Ascending aorta (tissue), 2 donors: ENCODE measurements at regions of chr3 and their contacts with region 1.

Region 1: DNA sequence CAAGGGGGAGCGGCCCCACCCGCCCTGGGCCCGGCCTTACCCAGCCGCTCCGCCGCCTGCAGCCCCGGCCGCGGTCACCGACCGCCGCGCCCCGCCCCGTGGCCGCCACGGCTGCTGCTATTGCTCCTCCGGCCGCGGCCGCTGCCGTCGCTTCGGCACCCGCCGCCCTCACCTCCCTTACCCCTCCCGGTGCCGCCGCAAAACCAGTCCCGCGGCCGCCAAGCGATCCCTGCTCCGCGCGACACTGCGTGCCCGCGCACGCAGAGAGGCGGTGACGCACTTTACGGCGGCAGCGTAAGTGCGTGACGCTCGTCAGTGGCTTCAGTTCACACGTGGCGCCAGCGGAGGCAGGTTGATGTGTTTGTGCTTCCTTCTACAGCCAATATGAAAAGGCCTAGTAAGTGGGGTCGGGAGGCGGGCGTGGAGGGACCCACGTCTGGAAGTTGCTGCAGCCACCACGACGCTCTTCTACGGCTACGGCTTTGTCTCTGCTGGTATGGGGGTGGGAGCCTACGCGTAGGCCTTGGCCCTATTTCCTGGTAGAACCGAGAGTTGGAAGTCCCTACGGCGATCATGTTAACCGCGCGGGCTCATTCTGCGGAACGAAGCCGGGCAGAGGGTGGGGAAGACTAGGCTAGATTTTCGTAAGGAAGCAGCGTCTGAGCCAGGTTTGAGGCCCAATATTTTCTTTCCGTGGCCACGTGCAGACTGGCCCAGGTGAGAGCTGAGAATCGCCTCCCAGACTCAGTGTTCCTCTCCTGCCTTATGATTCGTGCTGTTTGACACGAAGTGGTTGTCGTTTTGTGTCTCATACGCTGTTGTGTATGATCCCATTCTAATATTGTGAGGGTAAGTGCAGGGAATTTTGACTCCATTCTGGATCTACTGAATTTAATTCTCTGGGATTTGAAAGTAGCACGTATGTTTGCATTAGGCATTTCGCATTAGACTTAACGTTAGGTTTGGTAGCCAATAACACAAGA is at the starts of genes GNL3 and PBRM1:
- DNase-seq: peak; percentile 74 to 96
- H3K4me3 ChIP-seq: peak within 1 kb of the TSS; percentile 78 to 79
- H3K27ac ChIP-seq: peak within 1 kb of the TSS; percentile 89 to 98
- H3K4me1 ChIP-seq: peaks cover 3 to 30% of the 10 kb centered on the region in 2 donors
- H3K27me3 ChIP-seq: no peaks in the 10 kb centered on the region
- CTCF ChIP-seq: no peak
- total RNA-seq, gene GNL3: 50.4 TPM
- total RNA-seq, gene PBRM1: 36.7 TPM

Region 2: DNA sequence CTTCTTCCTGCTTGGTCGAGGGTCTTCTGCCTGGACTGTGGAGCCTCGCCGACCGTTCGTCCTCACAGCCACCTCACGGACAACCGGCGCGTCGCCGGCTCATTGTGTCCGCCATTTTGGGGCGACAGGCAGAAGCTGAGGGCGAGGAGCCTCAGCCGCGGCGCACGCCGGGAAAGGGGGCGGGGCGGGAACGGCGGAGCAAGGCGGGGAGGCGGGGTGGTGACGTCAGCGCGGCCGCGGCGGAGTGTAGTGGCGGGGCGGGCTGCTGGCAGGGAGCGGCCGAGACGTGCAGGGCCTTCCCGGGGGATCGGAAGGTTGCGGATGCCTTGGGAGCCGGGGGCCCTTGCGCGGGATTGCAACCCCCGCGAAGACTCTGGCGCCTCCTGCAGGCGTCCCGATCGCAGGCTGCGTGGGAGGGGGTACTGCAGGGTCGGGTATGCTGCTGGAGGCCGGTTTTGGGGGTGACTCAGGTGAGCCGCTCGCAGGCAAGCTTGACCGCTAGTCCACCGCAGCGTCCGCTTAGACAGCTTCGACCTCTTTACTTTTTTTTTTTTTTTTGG is 407.4 kb before region 1 on chr3 and contains the start of gene WDR82:
- intact Hi-C with region 1: loop called (anchors 10 kb)
- DNase-seq: peak; percentile 82 to 97
- H3K4me3 ChIP-seq: peak within 1 kb of the TSS; percentile 81 to 91
- H3K27ac ChIP-seq: peak within 1 kb of the TSS; percentile 94 to 97
- H3K4me1 ChIP-seq: peaks cover 11 to 43% of the 10 kb centered on the region in 2 donors
- H3K27me3 ChIP-seq: no peaks in the 10 kb centered on the region
- CTCF ChIP-seq: peak; percentile 48 to 54 (median 49)
- total RNA-seq, gene WDR82: 42.0 TPM

Region 3: DNA sequence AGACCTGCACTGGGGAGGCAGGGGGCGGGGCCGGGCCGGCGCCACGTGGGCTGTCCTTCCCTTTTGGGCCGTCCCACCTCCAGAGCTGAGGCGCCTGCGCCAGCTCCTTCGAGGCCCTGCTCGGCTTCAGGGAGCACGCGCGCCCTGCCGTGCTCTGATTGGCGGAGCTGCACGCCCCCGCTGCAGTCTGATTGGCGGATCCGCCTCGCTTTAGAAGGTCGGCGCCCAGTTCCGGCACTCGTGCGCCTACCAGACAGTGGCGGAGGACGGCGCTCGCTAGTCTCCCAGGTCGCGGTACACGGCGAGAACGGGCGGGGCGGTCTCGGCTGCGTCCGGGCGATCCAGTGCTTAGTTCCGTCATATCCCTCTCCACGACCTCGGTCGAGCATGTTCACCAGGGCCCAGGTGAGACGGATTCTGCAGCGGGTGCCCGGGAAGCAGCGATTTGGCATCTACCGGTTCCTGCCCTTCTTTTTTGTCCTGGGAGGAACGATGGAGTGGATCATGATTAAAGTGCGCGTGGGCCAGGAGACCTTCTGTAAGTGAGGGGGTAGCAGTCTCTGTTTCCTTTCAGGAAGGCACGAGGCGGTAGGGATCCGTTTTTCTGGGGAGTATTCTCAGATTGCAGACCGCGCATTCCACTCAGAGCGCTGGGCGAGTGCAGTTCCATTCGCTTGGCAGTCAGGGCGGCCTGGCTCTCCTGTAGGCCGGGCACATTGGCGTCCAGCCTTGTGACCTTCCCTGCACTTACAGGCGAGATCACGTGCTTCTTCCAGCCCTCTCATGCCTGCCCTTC is 149.4 kb before region 1 on chr3 and contains the start of gene UQCC5:
- intact Hi-C with region 1: loop called (anchors 5 kb)
- DNase-seq: peak; percentile 95 to 98
- H3K4me3 ChIP-seq: peak within 1 kb of the TSS; percentile 74 to 78
- H3K27ac ChIP-seq: peak within 1 kb of the TSS; percentile 80 to 86
- H3K4me1 ChIP-seq: peaks cover 15 to 28% of the 10 kb centered on the region in 2 donors
- H3K27me3 ChIP-seq: no peaks in the 10 kb centered on the region
- CTCF ChIP-seq: peak in 1 of 3 experiments; percentile 2
- total RNA-seq, gene UQCC5: not detected

Region 4: DNA sequence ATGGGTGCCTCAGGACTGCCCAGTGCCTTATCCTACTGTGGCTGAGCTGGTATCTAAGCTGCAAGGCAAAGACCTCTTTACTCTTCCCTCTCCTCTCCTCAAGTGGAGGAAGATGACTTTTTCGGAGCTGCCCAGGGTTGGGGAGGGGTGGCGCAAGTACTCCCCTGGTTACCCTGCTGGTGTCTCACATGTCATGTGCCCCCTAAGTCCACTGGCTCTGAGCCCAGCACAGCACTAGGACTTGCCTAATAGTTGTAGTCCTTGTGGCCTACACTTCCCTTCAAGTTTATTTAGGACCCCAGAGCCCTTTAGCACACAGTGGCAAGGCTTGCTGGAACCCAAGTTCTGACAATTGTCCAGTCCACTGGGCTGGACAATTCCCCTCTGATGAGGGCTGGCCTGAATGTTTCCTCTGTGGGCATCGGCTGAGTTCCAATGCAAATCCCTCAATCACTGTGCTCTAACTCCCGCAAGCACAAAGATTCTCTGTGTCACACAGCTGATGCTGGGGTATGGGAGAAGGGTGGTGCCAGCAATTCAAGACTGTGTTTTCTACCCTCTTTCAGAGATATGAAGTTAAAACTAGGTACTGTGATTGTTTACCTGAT is 89.2 kb before region 1 on chr3:
- intact Hi-C with region 1: no loop called
- DNase-seq: no peak
- H3K4me3 ChIP-seq: no peak overlapping the region
- H3K27ac ChIP-seq: no peak overlapping the region
- H3K4me1 ChIP-seq: no peaks in the 10 kb centered on the region
- H3K27me3 ChIP-seq: no peaks in the 10 kb centered on the region
- CTCF ChIP-seq: no peak

Region 5: DNA sequence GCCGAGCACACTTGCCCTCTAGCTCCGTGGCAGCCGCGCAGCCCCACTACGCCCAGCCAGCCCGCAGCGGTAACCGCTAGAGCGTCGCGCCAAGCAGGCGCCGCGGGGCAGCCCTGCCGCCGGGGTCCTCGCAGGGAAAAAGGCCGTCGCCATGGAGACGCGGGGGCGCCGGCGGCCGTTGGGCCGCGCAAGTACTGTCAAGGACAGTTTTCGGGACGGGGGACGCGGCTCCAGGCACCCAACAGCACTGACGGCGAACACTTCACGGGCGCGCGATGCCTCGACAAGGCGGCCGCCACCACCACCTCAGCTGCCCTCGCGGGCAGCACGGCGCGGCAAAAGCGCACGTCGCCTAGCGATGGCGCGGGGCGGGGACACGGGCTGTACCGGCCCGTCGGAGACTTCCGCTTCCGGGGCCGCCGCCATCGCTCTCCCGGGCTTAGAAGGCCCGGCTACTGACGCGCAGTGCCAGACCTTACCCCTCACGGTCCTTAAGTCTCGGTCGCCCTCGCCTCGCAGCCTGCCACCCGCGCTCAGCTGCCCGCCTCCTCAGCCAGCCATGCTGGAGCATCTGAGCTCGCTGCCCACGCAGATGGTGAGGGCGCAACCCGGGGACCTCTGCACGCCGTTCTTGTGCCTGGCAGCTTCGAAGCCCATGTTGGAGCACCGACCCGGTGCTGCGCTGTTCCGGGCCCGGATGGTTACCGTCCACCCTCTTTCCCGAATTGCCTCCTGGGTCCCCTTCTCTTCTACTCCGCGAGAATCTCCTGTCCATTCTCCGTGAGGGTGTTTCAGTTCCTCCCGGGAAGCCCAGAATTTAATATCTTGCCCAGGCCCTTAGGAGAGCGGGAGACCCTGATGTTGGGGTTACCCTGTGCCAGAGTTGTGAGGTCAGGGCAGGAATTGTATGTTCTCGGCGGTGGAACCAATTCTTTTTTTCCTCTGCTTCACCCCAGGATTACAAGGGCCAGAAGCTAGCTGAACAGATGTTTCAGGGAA is 20.0 kb after region 1 on chr3 and contains the starts of genes GLT8D1 and SPCS1:
- intact Hi-C with region 1: loop called (anchors 1 kb)
- DNase-seq: peak in 1 of 2 donors; percentile 89
- H3K4me3 ChIP-seq: peak within 1 kb of the TSS; percentile 85 to 86
- H3K27ac ChIP-seq: peak within 1 kb of the TSS; percentile 85 to 89
- H3K4me1 ChIP-seq: peaks cover 10 to 23% of the 10 kb centered on the region in 2 donors
- H3K27me3 ChIP-seq: no peaks in the 10 kb centered on the region
- CTCF ChIP-seq: no peak
- total RNA-seq, gene GLT8D1: 38.3 TPM
- total RNA-seq, gene SPCS1: 170 TPM

Region 6: GRCh38 chr3:53045518-53046170 is 359.6 kb after region 1 on chr3 and contains the start of gene SFMBT1:
- intact Hi-C with region 1: loop called (anchors 5 kb)
- DNase-seq: peak in 1 of 2 donors; percentile 76
- H3K4me3 ChIP-seq: peak within 1 kb of the TSS; percentile 99 to 100
- H3K27ac ChIP-seq: peak within 1 kb of the TSS; percentile 78 to 90
- H3K4me1 ChIP-seq: peaks cover 0 to 4% of the 10 kb centered on the region in 2 donors
- H3K27me3 ChIP-seq: no peaks in the 10 kb centered on the region
- CTCF ChIP-seq: no peak
- total RNA-seq, gene SFMBT1: 1.4 TPM